ENCODE measurements at regions of chr3 and their contacts with region 1.

Region 1: GRCh38 chr3:110314512-110315114 is 757.0 kb upstream of the NECTIN3 start:
- DNase-seq: peak; percentile 9
- ATAC-seq: peak; percentile 90
- H3K4me3 ChIP-seq: no peak overlapping the region
- H3K27ac ChIP-seq: no peak overlapping the region
- H3K4me1 ChIP-seq: no peaks in the 10 kb centered on the region
- H3K27me3 ChIP-seq: no peaks in the 10 kb centered on the region
- CTCF ChIP-seq: peak; percentile 70 to 83 (median 78)
- EP300 ChIP-seq: no peak
- POLR2A ChIP-seq: no peak
- RAD21 ChIP-seq: peak; percentile 56

Region 2: GRCh38 chr3:109275702-109276293 is 1038.8 kb before region 1 on chr3:
- CTCF ChIA-PET with region 1: interaction called, 14 read pairs
- POLR2A ChIA-PET with region 1: no interaction called
- RAD21 ChIA-PET with region 1: interaction called, 10 read pairs
- SMC1A ChIA-PET with region 1: interaction called, 3 read pairs
- in situ Hi-C with region 1: no loop called
- intact Hi-C with region 1: loop called (anchors 5 kb)
- DNase-seq: no peak
- ATAC-seq: 0 out of 3 replicates have a peak, but pooled peaks have one; percentile 31
- H3K4me3 ChIP-seq: no peak overlapping the region
- H3K27ac ChIP-seq: no peak overlapping the region
- H3K4me1 ChIP-seq: no peaks in the 10 kb centered on the region
- H3K27me3 ChIP-seq: no peaks in the 10 kb centered on the region
- CTCF ChIP-seq: peak in 2 of 3 experiments; percentile 33 to 42; a peak in 2 of 6 replicates
- EP300 ChIP-seq: no peak
- POLR2A ChIP-seq: no peak
- RAD21 ChIP-seq: peak; percentile 49

Region 3: GRCh38 chr3:109532257-109533216 is 782.1 kb before region 1 on chr3:
- CTCF ChIA-PET with region 1: interaction called, 10 read pairs
- POLR2A ChIA-PET with region 1: no interaction called
- RAD21 ChIA-PET with region 1: interaction called, 4 read pairs
- SMC1A ChIA-PET with region 1: interaction called, 7 read pairs
- in situ Hi-C with region 1: no loop called
- intact Hi-C with region 1: loop called (anchors 1 kb)
- DNase-seq: no peak
- ATAC-seq: peak; percentile 66
- H3K4me3 ChIP-seq: no peak overlapping the region
- H3K27ac ChIP-seq: no peak overlapping the region
- H3K4me1 ChIP-seq: no peaks in the 10 kb centered on the region
- H3K27me3 ChIP-seq: no peaks in the 10 kb centered on the region
- CTCF ChIP-seq: peak in 1 of 3 experiments; percentile 22; a peak in 2 of 6 replicates
- EP300 ChIP-seq: no peak
- POLR2A ChIP-seq: no peak
- RAD21 ChIP-seq: peak; percentile 39

Region 4: DNA sequence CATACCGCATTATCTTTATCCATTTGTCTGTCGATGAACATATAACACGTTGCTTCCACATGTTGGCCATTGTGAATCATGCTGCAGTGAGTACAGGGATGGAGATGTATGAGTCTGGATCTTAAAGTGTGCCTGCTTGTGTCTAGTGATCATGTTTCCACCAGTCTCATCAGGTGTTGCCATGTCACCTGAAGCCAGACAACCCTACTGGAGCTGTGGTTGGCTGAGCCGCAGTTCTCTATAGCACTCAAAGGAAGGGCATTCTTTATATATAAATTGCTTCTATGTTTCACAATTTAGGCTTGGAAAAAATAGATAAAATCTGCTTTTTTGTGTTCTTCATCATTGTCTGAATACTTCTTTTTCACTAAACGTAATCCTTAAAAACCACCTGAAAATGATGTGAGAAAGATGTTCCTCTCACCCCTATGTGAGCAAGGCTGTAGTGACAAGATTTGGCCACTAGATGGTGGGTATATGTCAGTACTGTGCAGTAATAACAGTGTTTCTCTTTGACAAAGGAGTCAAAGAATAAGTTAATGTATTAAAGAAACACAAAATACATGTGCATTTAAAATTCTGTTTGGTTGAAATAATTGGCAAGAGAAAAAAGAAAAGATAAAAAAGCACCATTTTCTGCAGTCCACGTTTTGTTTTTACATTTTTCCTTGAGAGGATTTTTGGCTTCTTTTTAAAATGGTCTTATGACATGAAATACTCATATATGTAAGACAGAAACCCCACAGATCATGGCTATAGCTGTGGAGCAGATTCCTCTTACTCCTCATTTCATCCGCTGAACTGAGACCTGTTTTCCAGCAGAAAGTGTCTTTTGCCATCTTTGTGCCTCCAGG is 582.8 kb before region 1 on chr3:
- CTCF ChIA-PET with region 1: interaction called, 7 read pairs
- POLR2A ChIA-PET with region 1: no interaction called
- RAD21 ChIA-PET with region 1: no interaction called
- SMC1A ChIA-PET with region 1: interaction called, 6 read pairs
- in situ Hi-C with region 1: loop called (anchors 10 kb)
- intact Hi-C with region 1: loop called (anchors 1 kb)
- DNase-seq: no peak
- ATAC-seq: peak; percentile 91
- H3K4me3 ChIP-seq: no peak overlapping the region
- H3K27ac ChIP-seq: no peak overlapping the region
- H3K4me1 ChIP-seq: no peaks in the 10 kb centered on the region
- H3K27me3 ChIP-seq: no peaks in the 10 kb centered on the region
- CTCF ChIP-seq: peak; percentile 73 to 79 (median 74)
- EP300 ChIP-seq: no peak
- POLR2A ChIP-seq: no peak
- RAD21 ChIP-seq: peak; percentile 72

Region 5: DNA sequence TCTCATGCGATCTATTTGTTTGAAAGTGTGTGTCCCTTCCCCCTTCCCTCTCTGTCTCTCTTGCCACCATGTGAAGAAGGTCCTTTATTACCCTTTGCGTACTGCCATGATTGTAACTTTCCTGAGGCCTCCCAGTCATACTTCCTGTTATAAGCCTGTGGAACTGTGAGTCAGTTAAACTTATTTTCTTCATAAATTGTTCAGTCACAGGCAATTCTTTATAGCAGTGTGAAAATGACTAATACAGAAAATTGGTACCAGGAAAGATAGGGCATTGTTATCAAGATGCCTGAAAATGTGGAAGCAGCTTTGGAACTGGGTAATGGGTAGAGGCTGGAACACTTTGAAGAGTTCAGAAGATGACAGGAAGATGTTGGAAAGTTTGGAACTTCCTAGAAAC is 13.3 kb after region 1 on chr3:
- CTCF ChIA-PET with region 1: interaction called, 15 read pairs
- POLR2A ChIA-PET with region 1: no interaction called
- RAD21 ChIA-PET with region 1: no interaction called
- SMC1A ChIA-PET with region 1: interaction called, 9 read pairs
- in situ Hi-C with region 1: no loop called
- intact Hi-C with region 1: no loop called
- DNase-seq: no peak
- ATAC-seq: no peak
- H3K4me3 ChIP-seq: no peak overlapping the region
- H3K27ac ChIP-seq: no peak overlapping the region
- H3K4me1 ChIP-seq: no peaks in the 10 kb centered on the region
- H3K27me3 ChIP-seq: no peaks in the 10 kb centered on the region
- CTCF ChIP-seq: no peak
- EP300 ChIP-seq: no peak
- POLR2A ChIP-seq: no peak
- RAD21 ChIP-seq: no peak

Region 6: GRCh38 chr3:110343945-110344344 is 29.3 kb after region 1 on chr3:
- CTCF ChIA-PET with region 1: no interaction called
- POLR2A ChIA-PET with region 1: no interaction called
- RAD21 ChIA-PET with region 1: no interaction called
- SMC1A ChIA-PET with region 1: no interaction called
- in situ Hi-C with region 1: no loop called
- intact Hi-C with region 1: no loop called
- DNase-seq: no peak
- ATAC-seq: peak; percentile 90
- H3K4me3 ChIP-seq: no peak overlapping the region
- H3K27ac ChIP-seq: no peak overlapping the region
- H3K4me1 ChIP-seq: no peaks in the 10 kb centered on the region
- H3K27me3 ChIP-seq: no peaks in the 10 kb centered on the region
- CTCF ChIP-seq: no peak
- EP300 ChIP-seq: peak in 1 of 2 experiments; percentile 20; a peak in 1 of 4 replicates
- POLR2A ChIP-seq: no peak
- RAD21 ChIP-seq: no peak

Measured in GM12878 (cell line).